Mammary epithelial cell (primary cell): ENCODE measurements at regions of chr9 and their contacts with region 1.

Region 1: GRCh38 chr9:111597817-111598729 is 1.4 kb downstream of the PTGR1 start:
- DNase-seq: peak; percentile 62
- H3K4me3 ChIP-seq: peak overlapping the region; percentile 70 to 98 (median 75)
- H3K27ac ChIP-seq: peak overlapping the region; percentile 60
- H3K4me1 ChIP-seq: peaks cover 12% of the 10 kb centered on the region
- H3K27me3 ChIP-seq: no peaks in the 10 kb centered on the region
- CTCF ChIP-seq: peak; percentile 75 to 85

Region 2: GRCh38 chr9:111501648-111502047 is 96.4 kb before region 1 on chr9:
- CTCF ChIA-PET with region 1: no interaction called
- dilution Hi-C with region 1: no loop called
- in situ Hi-C with region 1: no loop called
- intact Hi-C with region 1: no loop called
- DNase-seq: no peak
- H3K4me3 ChIP-seq: no peak overlapping the region
- H3K27ac ChIP-seq: no peak overlapping the region
- H3K4me1 ChIP-seq: no peaks in the 10 kb centered on the region
- H3K27me3 ChIP-seq: no peaks in the 10 kb centered on the region
- CTCF ChIP-seq: no peak

Region 3: GRCh38 chr9:111621895-111622480 is 23.9 kb after region 1 on chr9:
- CTCF ChIA-PET with region 1: interaction called, 3 read pairs
- dilution Hi-C with region 1: no loop called
- in situ Hi-C with region 1: no loop called
- intact Hi-C with region 1: loop called (anchors 1 kb)
- DNase-seq: peak; percentile 14
- H3K4me3 ChIP-seq: no peak overlapping the region
- H3K27ac ChIP-seq: no peak overlapping the region
- H3K4me1 ChIP-seq: peaks cover 10% of the 10 kb centered on the region
- H3K27me3 ChIP-seq: no peaks in the 10 kb centered on the region
- CTCF ChIP-seq: peak; percentile 80 to 86

Region 4: DNA sequence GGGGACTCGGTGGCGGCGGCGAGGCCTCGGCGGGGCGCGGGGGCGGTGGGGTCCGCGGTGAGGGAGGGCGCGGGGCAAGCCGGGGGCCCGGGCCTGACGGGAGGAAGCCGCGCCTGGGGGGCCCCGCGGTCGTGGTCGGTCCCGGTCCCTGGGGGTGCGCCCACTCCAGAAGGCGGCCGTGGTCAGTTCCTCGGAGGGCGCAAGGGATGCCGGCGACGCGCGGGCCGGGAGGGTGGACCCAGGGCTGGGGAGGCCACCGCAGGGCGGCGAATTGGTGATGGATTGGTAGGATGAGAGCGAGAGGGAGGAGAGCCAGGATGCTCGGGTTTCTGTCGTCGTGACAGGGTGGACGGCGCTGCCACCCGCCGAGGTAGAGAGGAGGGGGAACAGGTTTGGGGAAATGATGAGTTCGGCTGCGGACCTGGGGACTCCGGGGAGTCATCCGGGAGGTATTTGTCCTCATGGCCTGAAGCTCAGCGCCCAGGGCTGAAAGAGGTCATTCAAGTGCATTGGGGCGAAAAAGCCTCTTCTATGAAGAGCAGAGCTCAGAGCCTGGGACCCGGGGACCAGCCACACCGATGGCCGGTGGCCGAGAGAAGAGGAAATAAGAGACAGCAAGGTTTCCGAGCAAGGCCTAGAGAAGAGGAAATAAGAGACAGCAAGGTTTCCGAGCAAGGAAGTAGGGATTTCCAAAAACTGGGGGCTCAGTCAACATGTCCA is 63.9 kb after region 1 on chr9:
- CTCF ChIA-PET with region 1: no interaction called
- dilution Hi-C with region 1: no loop called
- in situ Hi-C with region 1: no loop called
- intact Hi-C with region 1: loop called (anchors 2 kb)
- DNase-seq: peak; percentile 32
- H3K4me3 ChIP-seq: peak overlapping the region; percentile 69 to 81 (median 72)
- H3K27ac ChIP-seq: peak overlapping the region; percentile 11
- H3K4me1 ChIP-seq: peaks cover 14% of the 10 kb centered on the region
- H3K27me3 ChIP-seq: no peaks in the 10 kb centered on the region
- CTCF ChIP-seq: no peak

Region 5: DNA sequence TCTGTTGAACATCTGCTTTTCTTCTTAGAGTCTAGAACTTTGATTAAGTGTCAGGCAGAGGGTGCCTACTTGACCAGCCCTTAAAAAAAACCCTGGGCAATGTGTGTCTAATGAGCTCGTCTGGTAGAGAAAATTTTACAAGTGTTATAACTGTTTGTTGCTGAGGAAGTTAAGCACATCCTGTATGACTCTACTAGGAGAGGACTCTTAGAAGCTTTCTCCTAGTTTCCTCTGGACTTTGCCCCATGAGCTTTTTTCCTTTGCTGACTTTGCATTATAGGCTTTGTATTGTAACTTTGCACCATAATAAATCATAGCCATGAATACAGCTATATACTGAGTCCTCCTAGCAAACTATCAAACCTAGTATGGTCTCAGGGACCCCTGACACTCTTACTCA is 102.7 kb after region 1 on chr9:
- CTCF ChIA-PET with region 1: no interaction called
- dilution Hi-C with region 1: no loop called
- in situ Hi-C with region 1: no loop called
- intact Hi-C with region 1: no loop called
- DNase-seq: no peak
- H3K4me3 ChIP-seq: no peak overlapping the region
- H3K27ac ChIP-seq: no peak overlapping the region
- H3K4me1 ChIP-seq: no peaks in the 10 kb centered on the region
- H3K27me3 ChIP-seq: no peaks in the 10 kb centered on the region
- CTCF ChIP-seq: no peak

Region 6: GRCh38 chr9:111730937-111731566 is 133.0 kb after region 1 on chr9:
- CTCF ChIA-PET with region 1: interaction called, 16 read pairs
- dilution Hi-C with region 1: no loop called
- in situ Hi-C with region 1: no loop called
- intact Hi-C with region 1: no loop called
- DNase-seq: peak; percentile 71
- H3K4me3 ChIP-seq: no peak overlapping the region
- H3K27ac ChIP-seq: peak overlapping the region; percentile 0
- H3K4me1 ChIP-seq: peaks cover 30% of the 10 kb centered on the region
- H3K27me3 ChIP-seq: no peaks in the 10 kb centered on the region
- CTCF ChIP-seq: no peak

Region 7: GRCh38 chr9:111759762-111760639 is 161.9 kb after region 1 on chr9:
- CTCF ChIA-PET with region 1: no interaction called
- dilution Hi-C with region 1: no loop called
- in situ Hi-C with region 1: no loop called
- intact Hi-C with region 1: loop called (anchors 1 kb)
- DNase-seq: peak; percentile 69
- H3K4me3 ChIP-seq: no peak overlapping the region
- H3K27ac ChIP-seq: peak overlapping the region; percentile 8
- H3K4me1 ChIP-seq: no peaks in the 10 kb centered on the region
- H3K27me3 ChIP-seq: no peaks in the 10 kb centered on the region
- CTCF ChIP-seq: peak; percentile 59 to 61

Region 8: DNA sequence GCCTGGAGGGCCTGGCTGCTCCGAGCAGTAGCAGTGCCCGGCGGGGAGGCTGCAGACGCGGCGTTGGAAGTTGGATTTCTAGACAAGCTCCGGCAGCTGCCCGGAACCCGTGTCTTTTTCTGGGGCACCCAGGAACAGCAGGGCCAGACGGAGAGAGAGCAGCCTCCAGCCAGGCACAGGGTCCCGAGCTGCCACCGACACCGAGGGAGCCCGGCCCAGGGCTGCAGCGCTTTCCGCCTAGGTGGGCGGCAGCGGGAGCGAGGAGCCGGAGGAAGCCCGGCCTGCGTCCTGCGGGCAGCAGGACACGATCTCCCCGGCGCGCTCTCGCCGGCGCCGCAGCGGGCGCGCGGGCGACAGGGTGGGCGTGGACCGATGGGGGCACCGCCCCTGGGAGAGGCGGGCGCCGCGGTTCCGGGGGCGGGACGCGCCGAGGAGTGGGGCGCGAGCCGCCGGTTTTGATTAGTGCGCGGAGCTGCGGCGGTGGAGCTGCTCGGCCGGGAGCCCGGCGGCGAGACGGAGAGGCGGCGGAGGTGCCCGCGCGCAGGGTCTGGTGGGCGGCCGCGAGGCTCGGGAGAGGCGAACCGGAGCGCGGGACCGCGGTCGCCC is 298.4 kb after region 1 on chr9 and contains the start of gene UGCG:
- CTCF ChIA-PET with region 1: no interaction called
- dilution Hi-C with region 1: no loop called
- in situ Hi-C with region 1: no loop called
- intact Hi-C with region 1: loop called (anchors 2 kb)
- DNase-seq: peak; percentile 92
- H3K4me3 ChIP-seq: peak within 1 kb of the TSS; percentile 76 to 94 (median 88)
- H3K27ac ChIP-seq: peak within 1 kb of the TSS; percentile 81
- H3K4me1 ChIP-seq: peaks cover 17% of the 10 kb centered on the region
- H3K27me3 ChIP-seq: no peaks in the 10 kb centered on the region
- CTCF ChIP-seq: no peak
- total RNA-seq, gene UGCG: 44.8 to 51.2 TPM

Region 9: GRCh38 chr9:112074250-112075008 is 476.4 kb after region 1 on chr9:
- CTCF ChIA-PET with region 1: interaction called, 11 read pairs
- dilution Hi-C with region 1: no loop called
- in situ Hi-C with region 1: loop called in 1 of 2 experiments (anchors 25 kb)
- intact Hi-C with region 1: loop called (anchors 2 kb)
- DNase-seq: peak; percentile 62
- H3K4me3 ChIP-seq: no peak overlapping the region
- H3K27ac ChIP-seq: peak overlapping the region; percentile 2
- H3K4me1 ChIP-seq: peaks cover 14% of the 10 kb centered on the region
- H3K27me3 ChIP-seq: no peaks in the 10 kb centered on the region
- CTCF ChIP-seq: peak; percentile 98 to 99